Endothelial cell of umbilical vein (primary cell): ENCODE measurements at regions of chr21 and their contacts with region 1.

Region 1: DNA sequence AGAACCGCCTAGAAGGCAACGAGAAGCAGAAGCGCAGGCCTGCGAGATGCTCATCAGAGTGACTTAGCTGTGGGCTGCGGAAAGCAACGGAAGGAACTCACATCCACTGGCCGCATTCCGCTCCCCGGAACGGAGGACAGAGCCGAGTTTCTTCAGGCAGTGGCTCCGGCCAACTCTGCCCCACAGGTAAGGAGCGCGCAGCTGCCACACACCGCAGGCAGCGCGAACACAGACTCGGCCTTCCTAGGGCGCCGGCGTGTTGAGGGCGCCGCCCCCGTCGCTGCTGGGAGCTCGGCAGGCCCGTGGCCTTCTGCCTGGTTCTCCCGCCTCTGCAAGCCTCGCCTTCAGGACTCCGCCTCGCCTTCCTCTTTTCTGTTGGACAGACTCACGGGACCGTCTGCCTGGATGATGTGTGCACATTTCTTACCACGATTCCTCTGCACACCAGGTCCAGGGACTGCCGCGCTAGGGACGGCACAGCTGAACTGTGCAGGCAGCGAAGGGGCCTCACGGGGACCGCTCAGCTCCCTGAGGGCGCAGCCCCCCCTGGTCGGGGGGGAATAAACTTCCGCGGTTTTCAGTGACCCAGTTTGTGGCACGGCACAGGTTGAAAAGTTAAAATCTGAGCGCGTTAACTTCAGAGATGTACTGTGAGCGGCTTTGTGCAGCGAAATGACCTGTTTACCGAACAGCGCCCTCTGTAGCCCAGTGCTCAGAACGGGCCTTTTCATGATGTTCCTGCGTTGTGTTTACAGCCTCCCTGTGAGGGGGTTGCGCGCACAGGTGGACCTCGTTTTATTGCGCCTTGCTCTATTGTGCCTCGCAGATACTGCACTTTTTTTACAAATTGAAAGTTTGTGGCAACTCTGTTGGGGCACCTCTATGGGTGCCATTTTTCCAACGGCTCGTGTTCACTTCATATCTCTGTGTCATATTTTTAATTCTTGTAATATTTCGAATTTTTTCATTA is 15.8 kb downstream of the TCP10L start:
- DNase-seq: peak; percentile 87
- H3K4me3 ChIP-seq: peak overlapping the region; percentile 38 to 71 (median 62)
- H3K27ac ChIP-seq: peak overlapping the region; percentile 79
- H3K4me1 ChIP-seq: peaks cover 11% of the 10 kb centered on the region
- H3K27me3 ChIP-seq: no peaks in the 10 kb centered on the region
- CTCF ChIP-seq: peak; percentile 85 to 90
- POLR2A ChIP-seq: peak; percentile 66

Region 2: GRCh38 chr21:32340863-32341848 is 228.4 kb before region 1 on chr21:
- CTCF ChIA-PET with region 1: no interaction called
- POLR2A ChIA-PET with region 1: no interaction called
- dilution Hi-C with region 1: no loop called
- intact Hi-C with region 1: loop called (anchors 5 kb)
- DNase-seq: no peak
- H3K4me3 ChIP-seq: no peak overlapping the region
- H3K27ac ChIP-seq: no peak overlapping the region
- H3K4me1 ChIP-seq: peaks cover 6% of the 10 kb centered on the region
- H3K27me3 ChIP-seq: no peaks in the 10 kb centered on the region
- CTCF ChIP-seq: no peak
- POLR2A ChIP-seq: no peak

Region 3: DNA sequence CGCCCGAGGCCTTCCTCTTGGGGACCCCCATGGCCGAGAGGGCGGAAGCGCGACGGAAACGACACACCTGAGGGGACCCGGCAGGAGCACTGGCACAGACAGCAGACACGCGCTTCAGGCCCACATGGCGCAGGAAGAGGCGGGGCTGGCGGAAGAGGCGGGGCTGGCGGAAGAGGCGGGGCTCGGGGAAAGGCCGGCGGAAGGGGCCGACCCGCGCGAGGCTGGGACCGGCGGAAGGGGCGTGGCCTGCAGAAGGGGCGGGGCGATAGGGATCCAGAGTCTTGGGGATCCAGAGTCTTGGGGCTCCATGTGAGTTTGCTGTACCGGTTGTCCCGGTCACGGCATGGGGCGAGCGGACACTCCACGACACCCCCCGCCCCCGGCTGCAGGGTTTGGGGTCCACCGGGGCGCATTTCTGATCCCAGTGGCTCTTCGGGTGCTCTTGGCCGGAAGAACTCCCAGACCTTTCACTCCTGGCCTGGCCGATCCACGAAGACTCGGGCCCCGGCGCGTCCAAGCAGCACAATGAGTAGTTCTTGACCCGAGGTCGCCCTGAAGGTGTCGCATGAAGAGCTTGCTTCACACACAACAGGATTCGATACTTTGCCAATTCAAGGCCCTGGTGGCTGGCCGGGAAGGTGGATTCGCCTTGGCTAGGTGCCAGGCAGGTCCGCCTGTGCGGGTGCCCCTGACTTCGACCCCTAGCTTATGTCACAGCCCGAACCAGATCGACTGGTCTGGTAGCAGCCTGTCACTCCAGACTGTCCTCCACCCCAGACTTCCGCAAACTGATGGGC is 176.5 kb before region 1 on chr21 and contains the start of gene URB1:
- CTCF ChIA-PET with region 1: interaction called, 10 read pairs
- POLR2A ChIA-PET with region 1: no interaction called
- dilution Hi-C with region 1: no loop called
- intact Hi-C with region 1: no loop called
- DNase-seq: peak; percentile 87
- H3K4me3 ChIP-seq: peak within 1 kb of the TSS; percentile 75 to 79 (median 78)
- H3K27ac ChIP-seq: peak within 1 kb of the TSS; percentile 62
- H3K4me1 ChIP-seq: peaks cover 13% of the 10 kb centered on the region
- H3K27me3 ChIP-seq: no peaks in the 10 kb centered on the region
- CTCF ChIP-seq: no peak
- POLR2A ChIP-seq: peak; percentile 92
- total RNA-seq, gene URB1: 21.4 and 27.3 TPM in 2 replicates

Region 4: DNA sequence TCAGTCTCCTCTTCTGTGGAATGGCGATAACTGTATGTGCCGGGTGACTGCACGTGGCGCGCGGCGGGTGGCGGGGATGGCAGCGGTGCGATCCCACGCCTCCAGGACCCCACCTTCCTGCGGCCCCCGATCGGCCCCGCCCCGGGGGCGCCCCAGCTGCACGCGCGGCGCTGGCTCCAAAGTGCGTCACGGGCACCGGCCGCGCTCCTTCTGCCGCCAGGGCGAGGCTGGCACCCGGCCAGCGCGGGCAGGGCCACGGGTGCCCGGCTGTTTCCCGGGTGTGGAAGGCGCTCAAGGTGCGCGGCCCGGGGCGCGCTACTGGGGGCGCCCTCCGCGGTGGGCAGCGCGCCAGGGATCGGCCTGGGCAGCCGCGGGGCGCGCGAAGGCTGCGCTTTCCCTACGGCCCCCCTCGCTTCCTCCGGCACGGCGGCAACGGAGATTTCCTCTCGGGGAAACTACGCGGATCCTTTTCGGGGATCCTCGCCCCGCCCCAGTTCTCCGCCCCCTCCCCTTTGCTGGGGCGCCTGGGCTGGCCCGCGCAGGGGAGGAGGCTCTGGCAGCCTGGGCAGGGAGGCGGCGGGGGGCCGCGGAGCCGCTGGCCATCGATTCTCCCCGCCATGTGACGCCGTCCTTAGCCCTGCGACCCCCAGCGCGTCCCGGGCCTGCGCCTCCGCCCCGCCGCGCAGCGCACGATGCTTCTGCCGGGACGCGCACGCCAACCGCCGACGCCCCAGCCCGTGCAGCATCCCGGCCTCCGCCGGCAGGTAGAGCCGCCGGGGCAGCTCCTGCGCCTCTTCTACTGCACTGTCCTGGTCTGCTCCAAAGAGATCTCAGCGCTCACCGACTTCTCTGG is 157.2 kb before region 1 on chr21 and contains the start of gene EVA1C:
- CTCF ChIA-PET with region 1: interaction called, 40 read pairs
- POLR2A ChIA-PET with region 1: no interaction called
- dilution Hi-C with region 1: no loop called
- intact Hi-C with region 1: loop called (anchors 1 kb)
- DNase-seq: peak; percentile 69
- H3K4me3 ChIP-seq: peak within 1 kb of the TSS; percentile 46 to 81 (median 73)
- H3K27ac ChIP-seq: peak within 1 kb of the TSS; percentile 99
- H3K4me1 ChIP-seq: peaks cover 35% of the 10 kb centered on the region
- H3K27me3 ChIP-seq: no peaks in the 10 kb centered on the region
- CTCF ChIP-seq: peak in 1 of 2 donors; percentile 11
- POLR2A ChIP-seq: no peak
- total RNA-seq, gene EVA1C: 31.7 and 38.6 TPM in 2 replicates

Region 5: DNA sequence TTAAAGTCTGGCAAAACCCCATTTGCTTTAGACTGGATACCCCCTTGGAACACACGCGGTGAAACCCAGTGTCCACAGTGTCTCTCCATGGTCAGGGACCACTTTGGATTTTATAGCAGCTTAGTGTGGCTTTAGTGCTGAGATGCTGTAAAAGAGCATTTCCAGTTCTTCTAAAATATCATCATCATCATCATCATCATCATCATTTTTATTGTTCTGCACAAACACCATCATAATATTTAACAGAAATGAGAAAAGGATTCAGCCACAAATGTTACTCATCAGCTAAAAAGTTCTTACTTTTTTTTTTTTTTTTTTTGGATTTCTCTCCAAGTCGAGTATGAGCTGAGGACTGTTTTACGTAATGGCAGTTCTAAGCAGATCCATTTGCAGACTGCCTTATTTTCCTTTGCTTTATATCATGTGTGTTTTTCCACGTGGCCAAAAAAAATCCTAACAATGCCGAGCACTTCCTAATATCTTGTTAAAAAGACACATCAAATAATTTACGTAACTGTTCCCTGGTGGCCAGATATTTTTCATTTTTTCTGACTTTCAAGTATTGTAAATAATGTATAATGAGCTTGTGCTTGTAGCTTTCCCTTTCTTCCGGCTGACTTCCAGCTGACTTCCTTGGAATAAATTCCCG is 94.3 kb before region 1 on chr21:
- CTCF ChIA-PET with region 1: interaction called, 8 read pairs
- POLR2A ChIA-PET with region 1: no interaction called
- dilution Hi-C with region 1: no loop called
- intact Hi-C with region 1: loop called (anchors 1 kb)
- DNase-seq: peak; percentile 86
- H3K4me3 ChIP-seq: peak overlapping the region in 1 of 3 experiments; percentile 36
- H3K27ac ChIP-seq: peak overlapping the region; percentile 66
- H3K4me1 ChIP-seq: peaks cover 46% of the 10 kb centered on the region
- H3K27me3 ChIP-seq: no peaks in the 10 kb centered on the region
- CTCF ChIP-seq: no peak
- POLR2A ChIP-seq: no peak

Region 6: GRCh38 chr21:32545948-32546441 is 23.6 kb before region 1 on chr21:
- CTCF ChIA-PET with region 1: no interaction called
- POLR2A ChIA-PET with region 1: no interaction called
- dilution Hi-C with region 1: no loop called
- intact Hi-C with region 1: loop called (anchors 2 kb)
- DNase-seq: peak; percentile 38
- H3K4me3 ChIP-seq: no peak overlapping the region
- H3K27ac ChIP-seq: peak overlapping the region; percentile 96
- H3K4me1 ChIP-seq: peaks cover 22% of the 10 kb centered on the region
- H3K27me3 ChIP-seq: no peaks in the 10 kb centered on the region
- CTCF ChIP-seq: no peak
- POLR2A ChIP-seq: no peak

Region 7: GRCh38 chr21:32834916-32835235 is 265.3 kb after region 1 on chr21:
- CTCF ChIA-PET with region 1: no interaction called
- POLR2A ChIA-PET with region 1: no interaction called
- dilution Hi-C with region 1: no loop called
- intact Hi-C with region 1: no loop called
- DNase-seq: no peak
- H3K4me3 ChIP-seq: no peak overlapping the region
- H3K27ac ChIP-seq: no peak overlapping the region
- H3K4me1 ChIP-seq: no peaks in the 10 kb centered on the region
- H3K27me3 ChIP-seq: peaks cover 8 to 36% of the 10 kb centered on the region in 2 experiments
- CTCF ChIP-seq: no peak
- POLR2A ChIP-seq: no peak